Ascending aorta (tissue), 2 donors: ENCODE measurements at regions of chr2 and their contacts with region 1.

Region 1: GRCh38 chr2:62705007-62705829 is at the start of gene EHBP1:
- DNase-seq: peak; percentile 95 to 99
- H3K4me3 ChIP-seq: peak within 1 kb of the TSS; percentile 84 to 86
- H3K27ac ChIP-seq: peak within 1 kb of the TSS; percentile 91
- H3K4me1 ChIP-seq: peaks cover 4 to 20% of the 10 kb centered on the region in 2 donors
- H3K27me3 ChIP-seq: no peaks in the 10 kb centered on the region
- CTCF ChIP-seq: no peak
- total RNA-seq, gene EHBP1: 19.9 TPM

Region 2: GRCh38 chr2:61538200-61538919 is 1166.9 kb before region 1 on chr2 and contains the start of gene XPO1:
- intact Hi-C with region 1: loop called (anchors 2 kb)
- DNase-seq: peak; percentile 97 to 99
- H3K4me3 ChIP-seq: peak within 1 kb of the TSS; percentile 86 to 98
- H3K27ac ChIP-seq: peak within 1 kb of the TSS; percentile 96 to 98
- H3K4me1 ChIP-seq: peaks cover 0 to 16% of the 10 kb centered on the region in 2 donors
- H3K27me3 ChIP-seq: no peaks in the 10 kb centered on the region
- CTCF ChIP-seq: no peak
- total RNA-seq, gene XPO1: 47.9 TPM

Region 3: DNA sequence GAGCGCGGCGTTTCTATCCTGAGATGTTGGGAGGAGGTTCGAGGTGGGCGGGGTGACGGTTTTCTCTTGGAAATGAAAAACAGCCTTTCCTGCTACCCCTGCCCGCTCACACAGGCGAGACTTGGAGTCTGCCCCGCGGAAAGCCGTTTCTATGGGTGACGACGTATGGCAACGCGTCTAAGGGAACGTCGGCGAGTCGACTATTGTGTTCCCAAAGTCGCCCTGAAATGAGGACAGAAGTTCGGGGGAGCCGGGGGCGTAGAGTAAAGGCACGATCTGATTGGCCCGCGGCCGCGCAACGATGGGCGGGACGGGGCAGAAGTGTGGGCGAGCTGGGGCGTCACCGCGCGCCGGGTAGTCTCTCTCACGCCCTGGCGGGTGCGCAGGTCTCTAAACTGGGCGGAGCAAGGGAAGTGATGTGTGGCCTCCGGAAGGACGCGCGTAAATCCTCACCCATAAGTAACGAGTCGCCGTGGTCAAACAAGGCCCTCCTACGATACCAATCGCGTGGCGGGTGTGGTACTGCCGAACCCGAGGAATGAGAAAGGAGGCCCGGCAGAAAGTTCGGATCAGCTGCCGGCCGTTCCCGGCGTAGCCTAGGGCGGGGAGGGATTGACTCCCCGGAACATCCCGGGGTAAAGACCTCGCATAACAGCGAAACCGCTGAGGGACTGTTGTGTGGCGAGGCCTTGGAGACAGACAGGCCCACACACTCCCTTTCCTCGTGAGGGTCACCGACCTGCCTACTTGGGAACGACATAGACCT is 941.0 kb before region 1 on chr2:
- intact Hi-C with region 1: loop called (anchors 10 kb)
- DNase-seq: peak; percentile 90 to 99
- H3K4me3 ChIP-seq: peak overlapping the region; percentile 55 to 88
- H3K27ac ChIP-seq: peak overlapping the region; percentile 97 to 99
- H3K4me1 ChIP-seq: no peaks in the 10 kb centered on the region
- H3K27me3 ChIP-seq: no peaks in the 10 kb centered on the region
- CTCF ChIP-seq: no peak

Region 4: DNA sequence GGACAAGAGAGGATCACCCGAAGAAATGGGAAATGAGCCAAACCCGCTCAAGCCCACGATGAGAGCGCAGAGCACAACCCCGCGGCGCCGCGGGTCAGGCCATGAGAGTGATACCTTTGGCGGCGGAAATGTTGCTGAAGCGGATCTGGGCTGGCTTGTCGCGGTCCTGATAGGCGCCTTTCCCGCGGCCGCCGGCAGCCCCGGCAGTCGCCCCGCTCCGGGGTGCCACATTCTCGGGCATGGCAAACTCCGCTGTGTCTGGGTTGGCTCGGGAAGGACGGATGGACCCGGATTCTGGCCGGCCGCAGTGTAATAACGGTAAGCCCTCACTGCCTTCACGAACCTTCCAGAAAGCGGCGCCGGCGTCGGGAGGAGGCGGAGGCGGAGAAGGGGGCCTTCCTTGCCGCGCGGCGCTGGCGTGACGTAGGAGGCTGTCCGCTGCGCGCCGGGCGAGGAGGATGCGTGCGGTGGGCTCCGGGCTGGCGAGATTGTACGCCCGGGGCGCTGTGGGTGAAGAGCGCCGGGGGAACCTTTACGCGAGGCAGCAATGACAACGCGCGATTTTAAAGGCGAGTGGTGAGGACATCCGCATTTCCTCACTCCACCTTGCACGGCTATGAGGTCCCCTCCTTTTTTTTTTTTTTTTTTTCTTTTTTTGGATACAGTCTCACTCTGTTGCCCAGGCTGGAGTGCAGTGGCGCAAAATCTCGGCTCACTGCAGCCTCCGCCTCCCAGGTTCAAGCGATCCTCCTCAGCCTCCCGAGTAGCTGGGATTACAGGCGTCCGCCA is 816.8 kb before region 1 on chr2 and contains the start of gene CCT4:
- intact Hi-C with region 1: loop called (anchors 10 kb)
- DNase-seq: peak; percentile 38 to 91
- H3K4me3 ChIP-seq: peak within 1 kb of the TSS; percentile 76 to 99
- H3K27ac ChIP-seq: peak within 1 kb of the TSS; percentile 92 to 97
- H3K4me1 ChIP-seq: peaks cover 3 to 6% of the 10 kb centered on the region in 2 donors
- H3K27me3 ChIP-seq: no peaks in the 10 kb centered on the region
- CTCF ChIP-seq: no peak
- total RNA-seq, gene CCT4: 35.3 TPM

Region 5: DNA sequence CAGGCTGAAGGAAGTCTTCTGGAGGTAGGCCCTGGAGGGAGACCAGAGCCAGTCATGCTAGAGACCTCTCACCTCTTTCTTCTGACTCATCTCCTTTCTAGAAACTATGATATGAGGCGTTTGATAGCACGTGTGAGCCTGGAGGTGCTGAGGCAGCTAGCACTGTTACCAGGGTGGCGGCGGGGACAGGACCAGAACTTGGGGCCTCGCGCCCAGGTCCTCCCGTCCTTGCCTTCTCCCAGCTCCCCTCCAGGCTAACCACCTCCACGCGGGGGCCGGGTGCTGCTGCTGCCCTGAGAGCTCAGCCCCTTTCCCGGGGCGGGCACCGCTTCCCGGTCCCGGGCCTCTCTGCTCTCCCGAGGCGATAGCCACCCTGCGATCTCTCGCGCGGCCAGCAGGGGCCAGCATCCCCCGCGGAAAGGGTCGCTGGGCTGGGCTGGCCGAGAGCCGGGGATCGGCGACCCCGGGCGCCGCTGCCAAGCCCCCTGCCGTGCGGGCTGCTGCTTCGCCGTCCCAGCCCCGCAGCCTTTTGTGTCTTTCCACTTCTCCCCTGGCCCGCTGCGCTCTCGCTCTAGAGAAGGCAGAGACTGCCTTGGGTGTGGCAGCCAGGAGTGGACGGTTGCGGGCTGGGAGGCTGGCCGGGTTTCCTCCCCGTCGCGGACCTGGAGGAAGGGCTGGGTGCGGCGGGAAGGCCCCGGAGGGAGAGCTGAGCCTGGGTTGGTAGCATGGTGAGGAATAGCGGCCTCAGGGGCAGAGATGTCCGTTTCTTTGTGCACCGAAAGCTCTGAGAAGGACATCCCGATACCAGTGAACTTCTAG is 248.3 kb before region 1 on chr2:
- intact Hi-C with region 1: loop called (anchors 1 kb)
- DNase-seq: peak in 1 of 2 donors; percentile 81
- H3K4me3 ChIP-seq: peak overlapping the region; percentile 47 to 85
- H3K27ac ChIP-seq: peak overlapping the region in 1 of 2 donors; percentile 35
- H3K4me1 ChIP-seq: peaks cover 0 to 2% of the 10 kb centered on the region in 2 donors
- H3K27me3 ChIP-seq: no peaks in the 10 kb centered on the region
- CTCF ChIP-seq: peak; percentile 97 to 99 (median 97)

Region 6: DNA sequence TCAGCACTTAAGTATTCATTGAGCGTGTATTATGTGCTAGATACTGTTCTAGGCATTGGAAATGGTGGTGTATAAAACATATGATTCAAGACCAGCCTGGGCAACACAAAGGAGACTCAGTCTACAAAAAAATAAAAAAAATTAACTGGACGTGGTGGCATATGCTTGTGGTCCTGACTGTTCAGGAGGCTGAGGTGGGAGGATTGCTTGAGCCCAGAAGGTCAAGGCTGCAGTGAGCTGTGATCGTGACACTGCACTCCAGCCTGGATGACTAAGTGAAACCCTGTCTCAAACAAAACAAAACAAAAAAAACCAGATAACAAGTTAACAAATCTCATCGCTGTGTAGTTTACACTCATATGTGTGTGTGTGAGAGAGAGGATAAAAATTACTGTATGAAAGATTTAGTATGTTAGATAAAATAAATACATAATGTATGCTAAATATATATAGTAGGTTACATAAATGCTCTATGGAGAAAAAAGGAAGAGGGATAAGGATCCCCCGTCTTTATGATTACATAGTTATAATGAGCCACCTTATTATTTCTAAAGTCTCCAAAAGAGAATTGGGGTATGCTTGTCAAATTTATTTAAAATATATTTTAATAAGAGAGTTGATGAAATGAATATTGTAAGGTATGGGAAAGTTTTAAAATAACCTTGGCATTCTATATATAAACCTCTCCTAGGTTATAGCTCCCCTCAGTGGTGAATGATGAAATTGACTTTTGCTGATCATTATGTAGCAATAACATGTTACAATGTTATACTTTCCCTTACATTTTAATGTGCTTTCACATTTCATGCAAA is 69.5 kb after region 1 on chr2:
- intact Hi-C with region 1: loop called (anchors 5 kb)
- DNase-seq: no peak
- H3K4me3 ChIP-seq: no peak overlapping the region
- H3K27ac ChIP-seq: no peak overlapping the region
- H3K4me1 ChIP-seq: peaks cover 0 to 4% of the 10 kb centered on the region in 2 donors
- H3K27me3 ChIP-seq: no peaks in the 10 kb centered on the region
- CTCF ChIP-seq: peak; percentile 62 to 84 (median 63)

Region 7: DNA sequence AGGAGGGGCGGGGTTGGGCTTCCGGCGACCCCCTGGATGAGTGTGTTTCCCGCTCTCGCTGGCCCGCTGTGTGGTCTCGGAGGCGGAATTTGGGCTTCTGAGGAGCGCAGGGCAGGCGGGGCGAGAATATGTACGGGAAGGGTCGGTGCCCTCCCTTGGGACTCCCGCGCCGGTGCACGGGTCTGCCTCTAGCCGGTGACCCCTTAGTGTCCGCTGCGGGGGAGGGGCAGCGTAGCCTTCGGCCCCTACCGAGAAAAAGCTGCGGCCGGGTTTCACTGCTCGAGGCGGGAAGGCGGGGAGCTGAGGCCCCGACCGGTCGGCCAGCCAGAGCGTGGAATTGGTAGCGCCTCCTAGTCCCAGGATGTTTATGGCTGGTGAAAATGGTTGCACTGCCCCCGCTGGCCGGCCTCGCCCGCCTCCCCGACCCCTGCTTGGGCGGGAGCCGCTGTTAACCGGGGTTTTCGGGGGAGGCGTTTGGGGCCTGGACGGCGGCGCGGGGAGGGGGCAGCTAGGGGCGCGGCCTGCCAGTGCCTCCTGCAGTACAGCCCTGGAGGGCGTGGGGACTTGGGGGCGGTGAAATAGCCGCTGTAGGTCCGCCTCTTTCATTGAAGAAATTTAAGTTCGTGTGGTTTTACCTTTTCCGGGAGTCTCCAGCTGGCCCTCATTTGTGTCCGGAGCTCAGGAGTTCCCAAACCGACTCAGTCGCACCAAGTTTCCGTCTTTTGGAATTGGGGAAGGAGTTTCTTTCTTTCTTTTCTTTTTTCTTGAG is 1136.2 kb after region 1 on chr2 and contains the start of gene UGP2:
- intact Hi-C with region 1: loop called (anchors 10 kb)
- DNase-seq: peak; percentile 86 to 97
- H3K4me3 ChIP-seq: peak within 1 kb of the TSS; percentile 67 to 91
- H3K27ac ChIP-seq: peak within 1 kb of the TSS; percentile 97 to 98
- H3K4me1 ChIP-seq: peaks cover 0 to 31% of the 10 kb centered on the region in 2 donors
- H3K27me3 ChIP-seq: no peaks in the 10 kb centered on the region
- CTCF ChIP-seq: peak in 1 of 3 experiments; percentile 22
- total RNA-seq, gene UGP2: 25.7 TPM